ENCODE measurements at regions of chr6 and their contacts with region 1.

Region 1: GRCh38 chr6:89819336-89820130 is at the start of gene MDN1:
- DNase-seq: peak; percentile 60 to 89 (median 87)
- ATAC-seq: peak; percentile 96
- H3K4me3 ChIP-seq: peak within 1 kb of the TSS; percentile 66
- H3K4me3 Mint-ChIP-seq: peak within 1 kb of the TSS; percentile 92 to 97 (median 96)
- H3K27ac ChIP-seq: peak within 1 kb of the TSS; percentile 75
- H3K27ac Mint-ChIP-seq: peak within 1 kb of the TSS; percentile 92 to 98 (median 96)
- H3K4me1 ChIP-seq: peaks cover 12 to 19% of the 10 kb centered on the region in 2 donors
- H3K4me1 Mint-ChIP-seq: peaks cover 16 to 49% (median 36%) of the 10 kb centered on the region in 7 donors
- H3K27me3 ChIP-seq: no peaks in the 10 kb centered on the region
- H3K27me3 Mint-ChIP-seq: no peaks in the 10 kb centered on the region
- total RNA-seq, gene MDN1: 54.9 to 66.1 (median 63.0) TPM

Region 2: GRCh38 chr6:88963139-88964090 is 856.1 kb before region 1 on chr6 and contains the start of gene RNGTT:
- CTCF ChIA-PET with region 1: no interaction called
- POLR2A ChIA-PET with region 1: no interaction called
- intact Hi-C with region 1: loop called in 1 of 2 experiments (anchors 1 kb)
- DNase-seq: peak; percentile 89 to 98 (median 95)
- ATAC-seq: peak; percentile 100
- H3K4me3 ChIP-seq: peak within 1 kb of the TSS; percentile 82
- H3K4me3 Mint-ChIP-seq: peak within 1 kb of the TSS; percentile 91 to 99 (median 98)
- H3K27ac ChIP-seq: peak within 1 kb of the TSS; percentile 82
- H3K27ac Mint-ChIP-seq: peak within 1 kb of the TSS; percentile 85 to 97 (median 94)
- H3K4me1 ChIP-seq: peaks cover 9 to 18% of the 10 kb centered on the region in 2 donors
- H3K4me1 Mint-ChIP-seq: peaks cover 25 to 57% (median 52%) of the 10 kb centered on the region in 7 donors
- H3K27me3 ChIP-seq: no peaks in the 10 kb centered on the region
- H3K27me3 Mint-ChIP-seq: peaks cover 0 to 2% (median 0%) of the 10 kb centered on the region in 5 donors
- total RNA-seq, gene RNGTT: 15.4 to 26.5 (median 20.8) TPM

Region 3: DNA sequence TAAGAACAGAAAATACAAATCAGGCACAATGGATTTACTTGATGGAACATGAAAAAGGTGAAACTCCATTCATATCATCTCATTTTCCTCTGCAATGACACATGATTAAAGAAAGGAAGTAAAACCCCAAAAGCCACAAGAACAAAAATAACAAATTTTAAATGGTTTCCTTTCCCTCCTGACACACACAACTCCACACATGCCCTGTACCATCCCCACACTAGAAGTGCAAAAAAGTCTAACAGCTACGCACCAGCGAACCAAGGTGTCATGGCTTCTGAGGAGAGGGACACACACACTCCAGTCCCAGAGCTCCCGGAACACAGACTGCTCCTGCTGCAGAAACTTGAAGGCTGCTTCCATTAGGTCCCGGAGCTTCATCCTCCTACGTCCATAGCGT is 25.2 kb before region 1 on chr6:
- CTCF ChIA-PET with region 1: interaction called, 3 read pairs
- POLR2A ChIA-PET with region 1: interaction called, 6 read pairs
- intact Hi-C with region 1: loop called (anchors 1 kb)
- DNase-seq: peak in 6 of 9 donors; percentile 45 to 65 (median 54)
- ATAC-seq: peak; percentile 64
- H3K4me3 ChIP-seq: no peak overlapping the region
- H3K4me3 Mint-ChIP-seq: peak overlapping the region; percentile 63 to 86 (median 72)
- H3K27ac ChIP-seq: no peak overlapping the region
- H3K27ac Mint-ChIP-seq: peak overlapping the region; percentile 28 to 80 (median 72)
- H3K4me1 ChIP-seq: peaks cover 16 to 21% of the 10 kb centered on the region in 2 donors
- H3K4me1 Mint-ChIP-seq: peaks cover 25 to 33% (median 28%) of the 10 kb centered on the region in 7 donors
- H3K27me3 ChIP-seq: no peaks in the 10 kb centered on the region
- H3K27me3 Mint-ChIP-seq: no peaks in the 10 kb centered on the region

Region 4: DNA sequence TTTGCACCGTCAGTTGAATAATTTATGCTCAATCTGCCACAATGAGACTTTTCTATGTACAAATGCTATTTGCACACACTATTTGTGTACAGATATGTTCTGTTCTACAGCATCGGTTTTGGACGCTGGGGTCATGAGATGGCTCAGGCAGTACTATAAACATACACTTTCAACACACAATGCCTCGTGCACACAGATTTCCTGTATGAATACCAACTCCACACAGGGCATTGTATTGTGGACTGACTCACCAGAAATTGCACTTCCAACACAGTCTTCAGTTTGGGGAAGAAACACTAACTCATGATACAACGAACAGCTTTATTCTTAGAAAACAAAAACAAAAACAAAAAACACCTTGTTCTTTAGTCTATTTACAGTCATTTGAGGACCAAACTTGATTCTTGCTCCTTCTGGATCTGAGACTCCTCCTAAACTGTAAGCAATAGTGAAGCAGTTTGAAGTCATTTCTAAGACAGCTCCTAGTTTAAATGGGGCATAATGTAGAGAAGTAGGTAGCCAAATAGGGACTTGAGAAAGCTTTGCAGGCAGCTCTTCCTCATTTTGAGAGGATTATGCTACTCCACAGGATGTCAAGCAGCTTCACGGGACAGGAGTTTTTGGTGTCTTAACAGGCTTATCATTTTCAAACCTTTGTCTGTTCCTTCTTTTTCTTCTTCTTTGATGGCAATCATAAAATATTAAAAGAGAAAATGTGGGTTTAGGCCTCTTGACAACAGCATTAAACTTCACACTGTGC is 108.4 kb after region 1 on chr6:
- CTCF ChIA-PET with region 1: no interaction called
- POLR2A ChIA-PET with region 1: no interaction called
- intact Hi-C with region 1: loop called in 1 of 2 experiments (anchors 5 kb)
- DNase-seq: no peak
- ATAC-seq: peak; percentile 70
- H3K4me3 ChIP-seq: no peak overlapping the region
- H3K4me3 Mint-ChIP-seq: peak overlapping the region in 1 of 10 donors; percentile 32
- H3K27ac ChIP-seq: peak overlapping the region; percentile 7
- H3K27ac Mint-ChIP-seq: peak overlapping the region in 8 of 9 donors; percentile 13 to 78 (median 66)
- H3K4me1 ChIP-seq: peaks cover 0 to 14% of the 10 kb centered on the region in 2 donors
- H3K4me1 Mint-ChIP-seq: peaks cover 28 to 69% (median 61%) of the 10 kb centered on the region in 7 donors
- H3K27me3 ChIP-seq: no peaks in the 10 kb centered on the region
- H3K27me3 Mint-ChIP-seq: no peaks in the 10 kb centered on the region

Region 5: GRCh38 chr6:90586836-90587638 is 767.5 kb after region 1 on chr6 and contains the start of gene MAP3K7:
- CTCF ChIA-PET with region 1: no interaction called
- POLR2A ChIA-PET with region 1: interaction called, 3 read pairs
- intact Hi-C with region 1: loop called (anchors 1 kb)
- DNase-seq: peak; percentile 83 to 96 (median 93)
- ATAC-seq: peak; percentile 90
- H3K4me3 ChIP-seq: peak within 1 kb of the TSS; percentile 88
- H3K4me3 Mint-ChIP-seq: peak within 1 kb of the TSS; percentile 92 to 99 (median 96)
- H3K27ac ChIP-seq: peak within 1 kb of the TSS; percentile 93
- H3K27ac Mint-ChIP-seq: peak within 1 kb of the TSS; percentile 93 to 100 (median 99)
- H3K4me1 ChIP-seq: peaks cover 17 to 22% of the 10 kb centered on the region in 2 donors
- H3K4me1 Mint-ChIP-seq: peaks cover 24 to 49% (median 45%) of the 10 kb centered on the region in 7 donors
- H3K27me3 ChIP-seq: no peaks in the 10 kb centered on the region
- H3K27me3 Mint-ChIP-seq: peaks cover 5 to 36% (median 11%) of the 10 kb centered on the region in 5 donors
- total RNA-seq, gene MAP3K7: 16.1 to 38.5 (median 29.9) TPM

Measured in naive thymus-derived CD4-positive, alpha-beta T cell (primary cell).